Activated CD4-positive, alpha-beta memory T cell treated with anti-CD3 and anti-CD28 coated beads, Interleukin-2, amount 10 ng/mL, durations not matched to agents 7 days and 5 days (primary cell): ENCODE measurements at regions of chr14 and their contacts with region 1.

Region 1: GRCh38 chr14:97602438-97603117 is 805.4 kb downstream of the VRK1 start:
- DNase-seq: peak; percentile 82
- H3K4me3 Mint-ChIP-seq: no peak overlapping the region
- H3K27ac Mint-ChIP-seq: no peak overlapping the region
- H3K4me1 Mint-ChIP-seq: peaks cover 30% of the 10 kb centered on the region
- H3K27me3 Mint-ChIP-seq: no peaks in the 10 kb centered on the region

Region 2: DNA sequence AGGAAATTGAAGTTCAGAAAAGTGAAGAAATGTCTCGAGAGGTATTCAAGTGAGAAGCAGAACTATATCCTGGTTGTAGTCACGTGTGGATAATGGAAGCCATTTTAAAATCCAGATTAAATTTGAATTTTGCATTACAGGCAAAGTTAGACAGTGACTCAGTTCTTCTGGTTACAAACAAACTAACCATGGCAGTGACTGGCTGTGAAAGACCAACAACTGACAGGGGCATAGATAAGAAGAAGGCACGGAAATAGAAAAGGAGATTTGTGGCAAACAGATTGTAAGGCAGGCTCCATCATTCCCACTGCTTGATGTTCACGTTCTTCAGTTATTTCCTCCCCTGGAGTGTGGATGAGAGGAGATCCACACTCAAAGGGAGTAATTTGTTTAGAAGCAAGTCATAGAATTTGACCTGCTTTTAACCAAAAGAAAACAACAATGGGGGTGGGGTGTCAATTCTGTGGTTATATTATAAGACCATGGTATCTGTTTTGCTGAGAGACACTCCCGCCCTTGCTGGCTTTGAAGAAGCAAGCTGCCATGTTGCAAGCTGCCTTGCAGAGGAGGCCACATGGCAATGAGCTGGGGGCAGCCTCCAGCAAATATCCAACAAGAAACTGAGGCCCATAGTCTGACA is 10.1 kb before region 1 on chr14:
- CTCF ChIA-PET with region 1: interaction called, 6 read pairs
- POLR2A ChIA-PET with region 1: interaction called, 16 read pairs
- DNase-seq: no peak
- H3K4me3 Mint-ChIP-seq: no peak overlapping the region
- H3K27ac Mint-ChIP-seq: peak overlapping the region; percentile 12
- H3K4me1 Mint-ChIP-seq: peaks cover 29% of the 10 kb centered on the region
- H3K27me3 Mint-ChIP-seq: no peaks in the 10 kb centered on the region

Region 3: DNA sequence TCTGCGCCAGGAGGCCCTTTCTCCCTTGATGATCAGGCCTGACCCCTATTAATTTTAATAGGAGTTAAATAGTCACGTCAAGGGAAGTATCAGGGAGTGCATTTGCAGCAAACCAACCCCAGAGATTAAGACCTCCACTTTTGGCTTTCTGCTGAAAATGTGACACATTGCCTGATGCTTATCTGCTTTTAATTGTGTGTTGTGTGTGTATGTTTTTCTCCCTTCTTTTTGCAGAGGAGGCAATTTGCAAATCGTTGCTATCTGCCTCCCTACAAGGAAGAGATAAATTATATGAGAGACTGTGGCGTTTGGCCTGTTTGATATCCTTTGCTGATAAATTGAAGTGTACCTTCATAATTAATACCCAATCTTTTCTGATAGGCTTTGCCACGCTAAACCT is 17.5 kb after region 1 on chr14:
- CTCF ChIA-PET with region 1: interaction called, 13 read pairs
- POLR2A ChIA-PET with region 1: interaction called, 38 read pairs
- DNase-seq: no peak
- H3K4me3 Mint-ChIP-seq: peak overlapping the region; percentile 73
- H3K27ac Mint-ChIP-seq: peak overlapping the region; percentile 92
- H3K4me1 Mint-ChIP-seq: peaks cover 41% of the 10 kb centered on the region
- H3K27me3 Mint-ChIP-seq: peaks cover 2% of the 10 kb centered on the region

Region 4: GRCh38 chr14:97634751-97635150 is 32.2 kb after region 1 on chr14:
- CTCF ChIA-PET with region 1: interaction called, 5 read pairs
- POLR2A ChIA-PET with region 1: interaction called, 17 read pairs
- DNase-seq: peak; percentile 29
- H3K4me3 Mint-ChIP-seq: peak overlapping the region; percentile 68
- H3K27ac Mint-ChIP-seq: peak overlapping the region; percentile 53
- H3K4me1 Mint-ChIP-seq: peaks cover 44% of the 10 kb centered on the region
- H3K27me3 Mint-ChIP-seq: peaks cover 2% of the 10 kb centered on the region

Region 5: DNA sequence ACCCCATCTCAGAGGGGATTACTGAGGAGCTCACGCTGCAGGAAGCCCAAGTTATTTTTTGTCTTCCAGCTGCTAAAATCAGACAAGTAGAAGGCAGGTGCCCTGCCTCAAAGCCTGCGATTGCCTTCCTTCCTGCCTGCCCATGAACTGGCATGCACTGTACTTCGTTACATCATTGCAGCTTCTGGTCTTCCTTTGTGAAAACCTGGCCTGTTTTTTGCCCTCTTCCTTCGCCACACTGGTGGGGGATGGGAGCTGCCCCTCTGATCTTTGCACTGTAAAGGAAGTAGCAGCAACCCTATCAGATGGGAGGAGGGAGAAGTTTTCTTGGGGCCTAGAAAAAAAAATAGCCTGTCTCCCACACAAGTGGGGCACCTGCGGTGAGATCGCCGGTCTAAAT is 570.7 kb after region 1 on chr14:
- CTCF ChIA-PET with region 1: no interaction called
- POLR2A ChIA-PET with region 1: no interaction called
- DNase-seq: peak; percentile 62
- H3K4me3 Mint-ChIP-seq: peak overlapping the region; percentile 40
- H3K27ac Mint-ChIP-seq: peak overlapping the region; percentile 86
- H3K4me1 Mint-ChIP-seq: peaks cover 92% of the 10 kb centered on the region
- H3K27me3 Mint-ChIP-seq: no peaks in the 10 kb centered on the region